K562 (cell line): ENCODE measurements at regions of chr7 and their contacts with region 1.

Region 1: DNA sequence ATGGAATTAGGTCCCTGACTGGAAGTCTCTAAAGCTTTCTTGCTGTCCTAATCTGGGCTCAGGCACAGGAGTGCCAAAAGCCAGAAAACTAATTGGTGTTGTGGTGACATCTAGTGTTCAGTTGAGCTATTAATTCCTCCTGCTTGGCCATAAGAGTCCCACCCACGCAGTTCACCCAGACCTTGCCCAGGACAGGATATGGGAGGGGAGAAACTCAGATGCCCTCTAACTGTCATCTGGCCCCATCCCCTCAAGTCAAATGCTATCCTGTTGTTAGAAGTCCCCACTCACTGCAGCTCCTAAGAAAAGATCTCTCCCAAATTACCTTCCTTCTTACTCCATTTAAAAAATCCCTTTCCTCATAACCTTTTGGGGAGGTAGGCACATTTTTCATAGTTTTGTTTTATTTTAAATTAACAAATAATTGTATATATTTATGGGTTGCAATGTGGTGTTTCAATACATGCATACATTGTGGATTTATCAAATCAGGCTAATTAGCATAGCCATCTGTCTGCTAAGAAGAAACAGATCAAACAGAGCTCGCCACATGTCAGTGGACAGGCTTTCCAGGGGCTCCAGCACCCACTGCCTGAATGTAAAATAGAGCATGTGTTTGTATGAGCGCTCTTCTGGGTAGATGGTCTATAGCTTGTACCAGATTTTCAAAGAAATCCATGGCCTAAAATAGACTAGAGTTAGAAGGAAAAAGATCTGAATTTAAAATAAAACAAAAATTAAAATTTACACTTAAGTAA is 84.0 kb downstream of the GSAP start:
- DNase-seq: peak; percentile 75 to 86 (median 79)
- ATAC-seq: peak; percentile 99
- H3K4me3 ChIP-seq: no peak overlapping the region
- H3K27ac ChIP-seq: no peak overlapping the region
- H3K4me1 ChIP-seq: no peaks in the 10 kb centered on the region
- H3K27me3 ChIP-seq: peaks cover 12 to 13% of the 10 kb centered on the region in 2 experiments; a peak in 4 of 5 replicates
- CTCF ChIP-seq: peak; percentile 75 to 87 (median 76)
- EP300 ChIP-seq: 0 out of 2 replicates have a peak, but pooled peaks have one; percentile 25
- POLR2A ChIP-seq: no peak
- RAD21 ChIP-seq: peak; percentile 74 to 84

Region 2: DNA sequence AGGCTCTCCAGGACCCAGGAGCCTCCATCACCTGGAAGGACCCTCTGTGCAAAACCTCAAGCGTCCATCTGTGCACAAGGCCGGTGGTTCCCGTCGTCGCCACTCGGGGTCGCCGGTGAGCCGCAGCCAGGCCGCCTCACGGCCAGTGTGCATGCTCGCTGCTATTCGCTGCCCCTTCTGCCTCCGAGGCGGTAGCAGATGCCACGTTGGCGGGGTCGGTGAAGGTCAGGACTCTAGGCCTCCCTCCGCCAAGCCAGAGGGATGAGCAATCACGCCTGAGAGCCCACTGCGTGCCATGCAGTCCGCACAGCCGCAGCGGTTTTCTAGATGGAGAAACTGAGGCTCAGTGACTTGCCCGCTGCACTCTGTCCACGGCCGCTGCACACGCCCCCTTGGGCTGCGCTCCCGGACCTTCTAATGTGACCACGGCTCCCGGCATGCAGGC is 816.1 kb before region 1 on chr7:
- CTCF ChIA-PET with region 1: no interaction called
- POLR2A ChIA-PET with region 1: no interaction called
- in situ Hi-C with region 1: no loop called
- intact Hi-C with region 1: loop called (anchors 5 kb)
- DNase-seq: peak; percentile 77 to 91 (median 86)
- ATAC-seq: peak; percentile 91
- H3K4me3 ChIP-seq: no peak overlapping the region
- H3K27ac ChIP-seq: no peak overlapping the region
- H3K4me1 ChIP-seq: peaks cover 0 to 28% of the 10 kb centered on the region in 2 experiments; a peak in 2 of 5 replicates
- H3K27me3 ChIP-seq: peaks cover 0 to 5% of the 10 kb centered on the region in 2 experiments; a peak in 2 of 5 replicates
- CTCF ChIP-seq: peak; percentile 97 to 98 (median 97)
- EP300 ChIP-seq: no peak
- POLR2A ChIP-seq: no peak
- RAD21 ChIP-seq: peak; percentile 85 to 92

Region 3: GRCh38 chr7:77247206-77247850 is 84.8 kb before region 1 on chr7:
- CTCF ChIA-PET with region 1: interaction called, 8 read pairs
- POLR2A ChIA-PET with region 1: no interaction called
- in situ Hi-C with region 1: no loop called
- intact Hi-C with region 1: loop called (anchors 2 kb)
- DNase-seq: peak; percentile 69 to 82 (median 74)
- ATAC-seq: peak; percentile 97
- H3K4me3 ChIP-seq: no peak overlapping the region
- H3K27ac ChIP-seq: no peak overlapping the region
- H3K4me1 ChIP-seq: no peaks in the 10 kb centered on the region; a peak in 1 of 5 replicates
- H3K27me3 ChIP-seq: no peaks in the 10 kb centered on the region
- CTCF ChIP-seq: peak; percentile 69 to 89 (median 84)
- EP300 ChIP-seq: no peak
- POLR2A ChIP-seq: no peak
- RAD21 ChIP-seq: peak; percentile 84 to 89

Region 4: GRCh38 chr7:77378584-77378983 is 46.5 kb after region 1 on chr7:
- CTCF ChIA-PET with region 1: no interaction called
- POLR2A ChIA-PET with region 1: no interaction called
- in situ Hi-C with region 1: no loop called
- intact Hi-C with region 1: no loop called
- DNase-seq: no peak
- ATAC-seq: no peak
- H3K4me3 ChIP-seq: no peak overlapping the region
- H3K27ac ChIP-seq: no peak overlapping the region
- H3K4me1 ChIP-seq: no peaks in the 10 kb centered on the region
- H3K27me3 ChIP-seq: peaks cover 0 to 5% of the 10 kb centered on the region in 2 experiments; a peak in 2 of 5 replicates
- CTCF ChIP-seq: no peak
- EP300 ChIP-seq: no peak
- POLR2A ChIP-seq: no peak
- RAD21 ChIP-seq: no peak